K562 (cell line): ENCODE measurements at regions of chr1 and their contacts with region 1.

Region 1: GRCh38 chr1:164786980-164787833 is 228.2 kb downstream of the PBX1 start:
- DNase-seq: peak; percentile 82 to 90 (median 89)
- ATAC-seq: peak; percentile 99
- H3K4me3 ChIP-seq: no peak overlapping the region
- H3K27ac ChIP-seq: no peak overlapping the region
- H3K4me1 ChIP-seq: no peaks in the 10 kb centered on the region
- H3K27me3 ChIP-seq: peaks cover 5 to 13% of the 10 kb centered on the region in 2 experiments; a peak in 3 of 5 replicates
- CTCF ChIP-seq: peak; percentile 90 to 95 (median 94)
- EP300 ChIP-seq: no peak; the same call in 1 of the 2 replicates
- POLR2A ChIP-seq: no peak
- RAD21 ChIP-seq: peak; percentile 94 to 95

Region 2: DNA sequence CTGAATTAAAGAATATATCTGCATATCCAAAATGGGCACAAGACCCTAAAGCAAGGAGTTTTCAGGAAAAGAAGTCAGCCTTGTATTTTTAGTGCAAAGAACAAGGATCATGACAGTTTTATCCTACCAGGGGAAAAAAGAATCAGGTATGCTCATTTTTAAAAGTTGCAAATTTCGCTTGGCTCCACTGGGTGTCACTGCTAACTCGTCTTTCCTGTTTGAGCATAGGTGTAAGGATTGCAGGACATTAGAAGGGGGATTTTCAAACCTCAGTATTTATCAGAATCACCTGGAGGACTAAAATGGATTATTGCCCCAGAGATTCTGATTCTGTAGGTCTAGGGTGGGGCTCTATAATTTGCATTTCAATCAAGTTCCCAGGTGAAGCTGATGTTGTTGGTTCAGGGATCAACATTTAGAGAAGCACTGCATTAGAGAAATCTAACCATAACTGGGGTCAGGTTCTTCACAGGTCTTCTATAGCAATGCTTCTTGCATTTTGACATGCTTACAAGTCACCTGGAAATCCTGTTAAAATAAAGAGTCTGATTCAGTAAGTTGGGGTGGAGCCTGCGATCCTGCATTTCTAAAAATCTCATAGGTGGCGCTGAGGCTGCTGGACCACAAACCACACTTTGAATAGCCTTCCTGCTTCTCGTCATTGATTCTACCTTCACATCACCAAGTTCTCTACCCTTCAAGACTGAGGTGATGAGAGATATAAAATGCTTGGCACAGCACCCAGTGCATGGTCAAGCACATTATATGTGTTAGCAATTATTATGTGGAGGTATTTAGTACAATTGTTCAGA is 1425.9 kb before region 1 on chr1:
- CTCF ChIA-PET with region 1: interaction called, 3 read pairs
- POLR2A ChIA-PET with region 1: no interaction called
- in situ Hi-C with region 1: no loop called
- intact Hi-C with region 1: loop called (anchors 5 kb)
- DNase-seq: peak in 2 of 4 experiments; percentile 18 to 30
- ATAC-seq: peak; percentile 78
- H3K4me3 ChIP-seq: no peak overlapping the region
- H3K27ac ChIP-seq: no peak overlapping the region
- H3K4me1 ChIP-seq: no peaks in the 10 kb centered on the region
- H3K27me3 ChIP-seq: no peaks in the 10 kb centered on the region
- CTCF ChIP-seq: peak; percentile 50 to 63 (median 55); a peak in 5 of 6 replicates
- EP300 ChIP-seq: no peak
- POLR2A ChIP-seq: no peak
- RAD21 ChIP-seq: peak; percentile 56 to 67

Region 3: DNA sequence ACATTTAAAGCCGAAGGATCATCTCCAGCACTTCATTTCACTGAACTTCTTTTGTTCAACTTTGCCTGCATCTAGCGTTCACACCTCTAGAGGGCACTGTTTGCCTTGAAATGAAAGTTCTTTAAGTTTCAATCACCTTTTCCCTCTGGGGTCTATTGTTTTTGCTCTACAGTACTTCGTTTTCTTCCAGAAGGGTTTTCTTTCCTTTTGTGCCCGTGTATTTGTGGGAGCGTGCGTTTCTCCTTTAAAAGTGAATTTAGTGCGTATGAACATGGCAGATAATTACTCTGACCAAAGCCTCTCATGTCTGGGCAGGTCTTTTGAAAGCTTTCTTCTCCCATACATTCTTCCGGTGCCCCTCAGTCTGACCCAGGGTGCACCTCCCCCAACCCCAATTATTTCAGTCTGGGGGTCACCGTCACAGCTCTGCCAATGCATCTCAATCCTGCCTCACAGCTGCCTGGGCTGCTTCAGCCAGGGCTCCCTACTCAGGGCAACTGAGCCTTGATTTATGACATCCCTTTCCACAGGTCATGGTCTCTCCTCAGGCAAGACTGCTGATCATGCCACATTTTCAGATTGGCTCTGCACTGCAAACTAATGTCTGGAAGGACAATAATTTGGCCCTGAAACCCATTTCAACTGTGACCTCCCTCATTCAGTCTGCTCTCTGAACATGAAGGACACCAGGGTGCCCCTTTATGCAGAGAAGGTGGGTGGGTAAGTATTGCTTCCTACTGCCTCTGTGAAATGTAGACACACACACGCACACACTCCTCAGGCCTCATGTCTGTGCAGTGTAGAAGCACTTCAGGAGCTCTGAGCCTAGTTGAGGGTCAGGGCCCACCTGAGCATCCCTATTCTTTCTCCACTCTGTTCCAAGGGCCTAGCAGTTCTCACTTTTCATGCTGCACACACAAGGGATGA is 1376.9 kb before region 1 on chr1:
- CTCF ChIA-PET with region 1: interaction called, 5 read pairs
- POLR2A ChIA-PET with region 1: no interaction called
- in situ Hi-C with region 1: loop called (anchors 10 kb)
- intact Hi-C with region 1: loop called (anchors 2 kb)
- DNase-seq: peak; percentile 30 to 72 (median 45)
- ATAC-seq: peak; percentile 74
- H3K4me3 ChIP-seq: no peak overlapping the region
- H3K27ac ChIP-seq: no peak overlapping the region
- H3K4me1 ChIP-seq: peaks cover 0 to 3% of the 10 kb centered on the region in 2 experiments; a peak in 1 of 5 replicates
- H3K27me3 ChIP-seq: no peaks in the 10 kb centered on the region; a peak in 1 of 5 replicates
- CTCF ChIP-seq: peak; percentile 57 to 85 (median 79)
- EP300 ChIP-seq: no peak
- POLR2A ChIP-seq: no peak
- RAD21 ChIP-seq: peak; percentile 72 to 85

Region 4: GRCh38 chr1:164617377-164618201 is 169.6 kb before region 1 on chr1:
- CTCF ChIA-PET with region 1: no interaction called
- POLR2A ChIA-PET with region 1: no interaction called
- in situ Hi-C with region 1: no loop called
- intact Hi-C with region 1: loop called (anchors 1 kb)
- DNase-seq: peak; percentile 29 to 34 (median 32)
- ATAC-seq: peak; percentile 83
- H3K4me3 ChIP-seq: no peak overlapping the region
- H3K27ac ChIP-seq: no peak overlapping the region
- H3K4me1 ChIP-seq: no peaks in the 10 kb centered on the region
- H3K27me3 ChIP-seq: no peaks in the 10 kb centered on the region; a peak in 1 of 5 replicates
- CTCF ChIP-seq: peak; percentile 48 to 63 (median 58)
- EP300 ChIP-seq: no peak
- POLR2A ChIP-seq: no peak
- RAD21 ChIP-seq: peak; percentile 51 to 66

Region 5: GRCh38 chr1:164683235-164683634 is 104.0 kb before region 1 on chr1:
- CTCF ChIA-PET with region 1: no interaction called
- POLR2A ChIA-PET with region 1: no interaction called
- in situ Hi-C with region 1: loop called (anchors 5 kb)
- intact Hi-C with region 1: no loop called
- DNase-seq: no peak
- ATAC-seq: no peak
- H3K4me3 ChIP-seq: no peak overlapping the region
- H3K27ac ChIP-seq: no peak overlapping the region
- H3K4me1 ChIP-seq: no peaks in the 10 kb centered on the region; a peak in 1 of 5 replicates
- H3K27me3 ChIP-seq: no peaks in the 10 kb centered on the region
- CTCF ChIP-seq: no peak
- EP300 ChIP-seq: no peak
- POLR2A ChIP-seq: no peak
- RAD21 ChIP-seq: no peak

Region 6: GRCh38 chr1:164803366-164803765 is 16.2 kb after region 1 on chr1:
- CTCF ChIA-PET with region 1: no interaction called
- POLR2A ChIA-PET with region 1: no interaction called
- in situ Hi-C with region 1: no loop called
- intact Hi-C with region 1: no loop called
- DNase-seq: no peak
- ATAC-seq: no peak
- H3K4me3 ChIP-seq: no peak overlapping the region
- H3K27ac ChIP-seq: no peak overlapping the region
- H3K4me1 ChIP-seq: no peaks in the 10 kb centered on the region; a peak in 1 of 5 replicates
- H3K27me3 ChIP-seq: peaks cover 0 to 5% of the 10 kb centered on the region in 2 experiments; a peak in 4 of 5 replicates
- CTCF ChIP-seq: no peak
- EP300 ChIP-seq: no peak
- POLR2A ChIP-seq: no peak
- RAD21 ChIP-seq: no peak